SK-MEL-5 (cell line): ENCODE measurements at regions of chr13 and their contacts with region 1.

Region 1: GRCh38 chr13:102651892-102652291 is 43.0 kb downstream of the METTL21C start:
- DNase-seq: no peak

Region 2: GRCh38 chr13:102700083-102701001 is 48.5 kb after region 1 on chr13:
- in situ Hi-C with region 1: loop called (anchors 5 kb)
- DNase-seq: no peak